Activated CD8-positive, alpha-beta T cell treated with anti-CD3 and anti-CD28 coated beads for 36 hours (primary cell): ENCODE measurements at regions of chr7 and their contacts with region 1.

Region 1: GRCh38 chr7:25179771-25180591 is 48.3 kb downstream of the NPVF start:
- DNase-seq: peak; percentile 96
- ATAC-seq: peak; percentile 99
- H3K4me3 Mint-ChIP-seq: peak overlapping the region; percentile 80
- H3K27ac Mint-ChIP-seq: peak overlapping the region; percentile 92
- H3K4me1 Mint-ChIP-seq: peaks cover 14% of the 10 kb centered on the region
- H3K27me3 Mint-ChIP-seq: no peaks in the 10 kb centered on the region
- CTCF ChIP-seq: peak; percentile 85

Region 2: GRCh38 chr7:25158966-25159365 is 21.0 kb before region 1 on chr7:
- CTCF ChIA-PET with region 1: interaction called, 10 read pairs
- POLR2A ChIA-PET with region 1: no interaction called
- intact Hi-C with region 1: no loop called
- DNase-seq: no peak
- ATAC-seq: no peak
- H3K4me3 Mint-ChIP-seq: no peak overlapping the region
- H3K27ac Mint-ChIP-seq: no peak overlapping the region
- H3K4me1 Mint-ChIP-seq: peaks cover 5% of the 10 kb centered on the region
- H3K27me3 Mint-ChIP-seq: no peaks in the 10 kb centered on the region
- CTCF ChIP-seq: no peak

Region 3: DNA sequence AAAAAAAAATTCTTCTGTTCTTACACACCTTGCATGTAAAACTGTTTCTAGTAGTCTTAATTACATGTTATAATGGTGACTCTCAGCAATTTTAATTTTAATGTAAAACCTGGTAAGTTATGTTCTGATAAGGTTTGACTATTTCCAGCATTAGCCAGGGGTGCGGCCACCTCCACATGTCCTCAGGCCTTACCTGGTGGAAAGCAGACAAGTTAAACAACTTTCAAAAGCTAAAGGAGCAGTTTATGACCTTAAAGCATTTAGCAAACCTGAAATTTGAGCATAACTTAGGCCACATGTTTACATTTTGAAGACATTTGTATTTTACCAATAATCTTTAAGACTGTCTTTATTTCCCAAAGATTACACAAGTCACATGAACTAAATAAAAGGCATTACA is 11.7 kb after region 1 on chr7:
- CTCF ChIA-PET with region 1: interaction called, 10 read pairs
- POLR2A ChIA-PET with region 1: no interaction called
- intact Hi-C with region 1: no loop called
- DNase-seq: no peak
- ATAC-seq: no peak
- H3K4me3 Mint-ChIP-seq: no peak overlapping the region
- H3K27ac Mint-ChIP-seq: no peak overlapping the region
- H3K4me1 Mint-ChIP-seq: no peaks in the 10 kb centered on the region
- H3K27me3 Mint-ChIP-seq: no peaks in the 10 kb centered on the region
- CTCF ChIP-seq: no peak